B cell (primary cell): ENCODE measurements at regions of chr2 and their contacts with region 1.

Region 1: DNA sequence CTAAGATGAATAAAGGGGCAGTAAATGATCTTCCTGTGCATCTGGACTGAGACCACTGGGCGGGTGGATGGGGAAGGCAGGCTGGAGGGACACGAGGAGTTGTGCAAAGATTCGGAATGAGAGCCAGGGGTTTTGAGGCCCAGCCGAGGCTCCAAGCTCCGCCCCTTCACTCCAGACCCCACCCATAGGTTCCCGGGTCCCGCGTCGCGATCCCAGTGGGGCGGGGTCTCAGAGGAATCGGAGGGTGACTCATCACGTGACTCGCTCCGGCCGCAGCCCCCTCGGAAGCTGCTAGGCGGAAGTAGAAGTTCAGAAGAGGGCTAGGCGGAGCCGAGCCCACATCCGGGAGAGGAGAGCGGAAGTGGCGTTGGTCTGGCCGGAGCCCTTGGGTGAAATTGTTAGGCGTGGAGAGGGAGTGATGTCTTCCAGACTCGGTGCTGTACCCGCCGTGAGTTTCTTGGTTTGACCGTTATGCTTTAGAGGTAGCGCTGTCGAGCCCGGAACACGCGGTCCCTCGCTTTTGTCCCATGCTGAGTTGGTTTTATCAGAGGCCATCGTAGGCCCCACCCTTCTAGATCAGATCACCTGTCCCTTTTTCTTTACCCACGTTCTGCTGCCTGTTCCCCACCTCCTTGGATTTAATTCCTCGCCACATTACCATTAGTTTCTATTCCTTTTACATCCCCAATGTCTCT is at the start of gene ZNF512:
- DNase-seq: peak; percentile 93
- ATAC-seq: peak; percentile 94
- H3K4me3 ChIP-seq: peak within 1 kb of the TSS; percentile 66 to 98 (median 80)
- H3K4me3 Mint-ChIP-seq: peak within 1 kb of the TSS; percentile 96
- H3K27ac ChIP-seq: peak within 1 kb of the TSS; percentile 70 to 72
- H3K27ac Mint-ChIP-seq: peak within 1 kb of the TSS; percentile 96
- H3K4me1 ChIP-seq: peaks cover 17 to 29% of the 10 kb centered on the region in 2 donors
- H3K4me1 Mint-ChIP-seq: peaks cover 40% of the 10 kb centered on the region
- H3K27me3 ChIP-seq: no peaks in the 10 kb centered on the region
- H3K27me3 Mint-ChIP-seq: peaks cover 1% of the 10 kb centered on the region
- CTCF ChIP-seq: no peak
- total RNA-seq, gene ZNF512: 65.2 and 72.3 TPM in 2 replicates

Region 2: DNA sequence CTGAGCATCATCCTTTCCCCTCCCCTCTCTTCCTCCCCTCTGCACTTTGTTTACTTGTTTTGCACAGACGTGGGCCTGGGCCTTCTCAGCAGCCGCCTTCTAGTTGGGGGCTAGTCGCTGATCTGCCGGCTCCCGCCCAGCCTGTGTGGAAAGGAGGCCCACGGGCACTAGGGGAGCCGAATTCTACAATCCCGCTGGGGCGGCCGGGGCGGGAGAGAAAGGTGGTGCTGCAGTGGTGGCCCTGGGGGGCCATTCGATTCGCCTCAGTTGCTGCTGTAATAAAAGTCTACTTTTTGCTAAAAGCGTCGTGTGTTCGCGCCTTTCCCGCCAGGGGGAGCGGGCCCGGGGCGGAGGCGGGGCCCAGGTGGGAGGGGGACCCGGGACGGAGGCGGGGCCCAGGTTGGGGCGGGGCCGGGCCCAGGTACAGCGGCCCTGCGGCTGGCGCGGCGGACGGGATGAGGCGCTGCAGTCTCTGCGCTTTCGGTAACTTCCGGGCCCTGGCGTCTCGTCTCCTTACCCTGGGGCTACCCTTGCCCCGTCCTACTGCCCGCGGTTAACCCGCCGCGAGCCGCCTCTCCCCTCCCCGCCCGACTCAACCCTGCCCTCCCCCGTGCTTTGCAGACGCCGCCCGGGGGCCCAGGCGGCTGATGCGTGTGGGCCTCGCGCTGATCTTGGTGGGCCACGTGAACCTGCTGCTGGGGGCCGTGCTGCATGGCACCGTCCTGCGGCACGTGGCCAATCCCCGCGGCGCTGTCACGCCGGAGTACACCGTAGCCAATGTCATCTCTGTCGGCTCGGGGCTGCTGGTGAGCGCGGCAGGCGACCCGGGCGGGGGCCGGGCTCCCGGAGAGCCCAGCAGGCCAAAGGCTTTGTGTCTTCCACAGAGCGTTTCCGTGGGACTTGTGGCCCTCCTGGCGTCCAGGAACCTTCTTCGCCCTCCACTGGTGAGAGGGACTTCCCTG is 140.6 kb before region 1 on chr2 and contains the start of gene KRTCAP3:
- CTCF ChIA-PET with region 1: no interaction called
- POLR2A ChIA-PET with region 1: no interaction called
- intact Hi-C with region 1: loop called (anchors 1 kb)
- DNase-seq: peak; percentile 70
- ATAC-seq: peak; percentile 98
- H3K4me3 ChIP-seq: peak within 1 kb of the TSS in 3 of 5 experiments; percentile 19 to 37 (median 27)
- H3K4me3 Mint-ChIP-seq: peak within 1 kb of the TSS; percentile 72
- H3K27ac ChIP-seq: no peak within 1 kb of the TSS
- H3K27ac Mint-ChIP-seq: peak within 1 kb of the TSS; percentile 72
- H3K4me1 ChIP-seq: peaks cover 3 to 6% of the 10 kb centered on the region in 2 donors
- H3K4me1 Mint-ChIP-seq: peaks cover 12% of the 10 kb centered on the region
- H3K27me3 ChIP-seq: no peaks in the 10 kb centered on the region
- H3K27me3 Mint-ChIP-seq: no peaks in the 10 kb centered on the region
- CTCF ChIP-seq: peak; percentile 58
- total RNA-seq, gene KRTCAP3: 15.0 and 16.5 TPM in 2 replicates

Region 3: DNA sequence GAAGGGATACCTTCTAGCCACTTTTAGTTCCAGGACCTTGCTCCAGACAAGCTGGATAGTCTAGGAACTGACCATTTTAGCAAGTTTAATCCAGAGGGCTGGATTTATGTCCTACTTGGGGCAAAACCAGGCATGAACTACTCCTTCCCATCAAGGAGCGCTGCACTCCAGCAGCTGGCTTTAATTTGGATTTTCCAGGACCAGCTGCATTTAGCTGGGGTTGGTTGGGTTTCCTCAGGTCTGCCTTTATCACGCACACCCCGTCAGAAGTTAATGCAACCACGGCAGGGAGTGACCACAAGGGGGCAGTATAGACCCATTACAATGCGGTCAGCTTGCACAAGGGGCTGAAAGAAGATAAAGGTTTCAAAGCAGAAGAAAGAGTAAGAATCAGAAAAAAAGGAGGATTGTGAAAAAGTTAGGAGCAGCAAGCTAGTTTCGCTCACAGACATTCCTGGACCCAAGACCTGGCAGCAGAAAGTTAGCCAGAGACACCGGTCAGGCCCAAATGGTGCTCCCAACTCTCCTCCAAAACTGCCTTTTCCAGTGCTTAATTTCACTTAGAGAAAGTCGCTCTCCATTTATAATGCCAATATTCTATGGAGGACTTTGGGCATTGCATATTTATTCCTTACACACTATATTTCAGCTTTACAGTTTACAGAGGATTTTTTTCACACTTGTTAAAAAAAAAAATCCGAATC is 120.9 kb after region 1 on chr2:
- CTCF ChIA-PET with region 1: no interaction called
- POLR2A ChIA-PET with region 1: no interaction called
- intact Hi-C with region 1: no loop called
- DNase-seq: peak; percentile 83
- ATAC-seq: peak; percentile 78
- H3K4me3 ChIP-seq: no peak overlapping the region
- H3K4me3 Mint-ChIP-seq: no peak overlapping the region
- H3K27ac ChIP-seq: no peak overlapping the region
- H3K27ac Mint-ChIP-seq: no peak overlapping the region
- H3K4me1 ChIP-seq: no peaks in the 10 kb centered on the region
- H3K4me1 Mint-ChIP-seq: peaks cover 4% of the 10 kb centered on the region
- H3K27me3 ChIP-seq: no peaks in the 10 kb centered on the region
- H3K27me3 Mint-ChIP-seq: peaks cover 12% of the 10 kb centered on the region
- CTCF ChIP-seq: peak; percentile 91